T-cell (primary cell): ENCODE measurements at regions of chr5 and their contacts with region 1.

Region 1: DNA sequence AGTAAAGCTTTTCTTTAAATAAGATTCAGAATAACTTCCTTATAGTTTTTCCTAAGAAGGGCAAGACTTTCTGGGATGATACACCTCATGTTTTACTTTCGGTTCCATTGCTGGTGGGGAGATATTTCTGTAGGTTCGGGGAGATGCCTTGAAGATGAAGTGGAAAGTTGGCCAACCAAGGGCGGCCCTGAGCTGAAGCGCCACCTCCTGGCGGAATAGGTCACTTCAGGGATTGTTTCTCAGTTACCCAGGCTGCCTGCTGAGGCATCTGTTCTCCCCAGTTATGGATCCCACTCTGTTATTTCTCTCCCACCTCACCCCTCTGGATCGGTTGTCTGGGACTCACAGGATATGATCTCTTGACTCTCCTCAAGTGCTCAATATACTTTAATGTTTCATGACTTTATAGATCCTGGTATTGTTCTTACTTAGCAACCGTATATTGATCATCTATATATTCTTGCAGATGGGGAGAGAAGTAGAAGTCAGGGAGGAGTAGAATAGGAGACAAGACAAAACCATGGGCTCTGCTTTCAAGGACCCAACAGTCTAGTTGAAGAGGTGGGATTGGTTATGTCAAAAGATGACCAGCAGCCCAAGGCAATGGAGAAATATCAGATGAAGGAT is 23.4 kb downstream of the MEGF10 start:
- DNase-seq: peak in 34 of 35 experiments; percentile 17 to 74 (median 54)
- ATAC-seq: peak; percentile 55 to 81 (median 66)
- H3K4me3 ChIP-seq: no peak overlapping the region
- H3K4me3 Mint-ChIP-seq: no peak overlapping the region
- H3K27ac ChIP-seq: no peak overlapping the region
- H3K27ac Mint-ChIP-seq: no peak overlapping the region
- H3K4me1 ChIP-seq: no peaks in the 10 kb centered on the region
- H3K4me1 Mint-ChIP-seq: peaks cover 0 to 2% (median 2%) of the 10 kb centered on the region in 3 donors
- H3K27me3 ChIP-seq: no peaks in the 10 kb centered on the region
- H3K27me3 Mint-ChIP-seq: peaks cover 5 to 7% of the 10 kb centered on the region in 2 donors

Region 2: DNA sequence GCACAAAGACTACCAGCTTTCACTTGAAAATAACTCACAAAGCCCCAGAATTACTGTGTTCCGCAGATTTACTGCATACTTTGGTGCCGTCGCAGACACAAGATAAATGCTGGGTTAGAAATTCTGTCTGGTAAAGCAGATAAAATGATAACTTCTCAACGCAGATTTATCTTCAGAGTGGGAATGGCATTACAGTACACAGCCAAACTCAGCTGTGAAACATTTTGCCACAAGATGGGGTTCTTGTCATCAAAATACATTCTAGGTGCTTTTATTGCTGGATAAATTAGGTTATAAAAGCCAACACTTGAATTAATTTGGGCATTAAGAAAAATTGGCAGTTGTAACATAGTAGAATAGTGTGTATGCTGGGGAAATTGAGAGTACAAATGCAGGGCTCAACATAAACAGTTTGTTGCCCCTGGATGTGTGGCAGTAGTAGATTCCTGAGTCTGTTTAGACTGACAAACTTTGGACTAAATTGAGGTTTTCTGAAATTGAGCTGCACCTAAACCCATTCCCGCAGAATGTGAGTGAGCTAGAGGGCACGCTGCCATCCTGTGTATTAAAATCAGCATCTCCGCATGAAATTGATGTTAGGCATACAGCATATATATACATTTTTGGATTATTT is 475.9 kb before region 1 on chr5:
- CTCF ChIA-PET with region 1: interaction called, 10 to 11 read pairs
- POLR2A ChIA-PET with region 1: no interaction called
- DNase-seq: peak in 3 of 35 experiments; percentile 11 to 45 (median 16)
- ATAC-seq: peak in 1 of 4 experiments; percentile 53
- H3K4me3 ChIP-seq: no peak overlapping the region
- H3K4me3 Mint-ChIP-seq: no peak overlapping the region
- H3K27ac ChIP-seq: no peak overlapping the region
- H3K27ac Mint-ChIP-seq: no peak overlapping the region
- H3K4me1 ChIP-seq: no peaks in the 10 kb centered on the region
- H3K4me1 Mint-ChIP-seq: peaks cover 0 to 5% (median 0%) of the 10 kb centered on the region in 3 donors
- H3K27me3 ChIP-seq: no peaks in the 10 kb centered on the region
- H3K27me3 Mint-ChIP-seq: no peaks in the 10 kb centered on the region

Region 3: DNA sequence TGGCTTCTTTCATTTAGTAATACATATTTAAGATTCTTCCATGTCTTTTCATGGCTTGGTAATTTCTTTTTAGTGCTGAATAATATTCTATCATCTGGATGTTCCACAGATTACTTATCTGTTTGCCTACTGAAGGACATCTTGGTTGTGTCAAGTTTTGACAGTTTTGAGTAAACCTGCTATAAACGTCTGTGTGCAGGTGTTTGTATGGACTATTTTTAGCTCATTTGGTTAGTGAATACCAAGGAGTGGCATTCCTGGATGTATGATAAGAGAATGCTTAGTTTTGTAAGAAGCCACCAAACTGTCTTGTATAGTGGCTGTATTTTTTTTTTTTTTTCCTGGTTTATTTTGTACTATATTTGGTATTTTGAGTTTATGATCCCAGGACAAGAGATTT is 241.9 kb after region 1 on chr5:
- CTCF ChIA-PET with region 1: no interaction called
- POLR2A ChIA-PET with region 1: no interaction called
- DNase-seq: no peak
- ATAC-seq: no peak
- H3K4me3 ChIP-seq: no peak overlapping the region
- H3K4me3 Mint-ChIP-seq: no peak overlapping the region
- H3K27ac ChIP-seq: no peak overlapping the region
- H3K27ac Mint-ChIP-seq: no peak overlapping the region
- H3K4me1 ChIP-seq: no peaks in the 10 kb centered on the region
- H3K4me1 Mint-ChIP-seq: no peaks in the 10 kb centered on the region
- H3K27me3 ChIP-seq: no peaks in the 10 kb centered on the region
- H3K27me3 Mint-ChIP-seq: no peaks in the 10 kb centered on the region